Natural killer cell (primary cell): ENCODE measurements at regions of chr11 and their contacts with region 1.

Region 1: DNA sequence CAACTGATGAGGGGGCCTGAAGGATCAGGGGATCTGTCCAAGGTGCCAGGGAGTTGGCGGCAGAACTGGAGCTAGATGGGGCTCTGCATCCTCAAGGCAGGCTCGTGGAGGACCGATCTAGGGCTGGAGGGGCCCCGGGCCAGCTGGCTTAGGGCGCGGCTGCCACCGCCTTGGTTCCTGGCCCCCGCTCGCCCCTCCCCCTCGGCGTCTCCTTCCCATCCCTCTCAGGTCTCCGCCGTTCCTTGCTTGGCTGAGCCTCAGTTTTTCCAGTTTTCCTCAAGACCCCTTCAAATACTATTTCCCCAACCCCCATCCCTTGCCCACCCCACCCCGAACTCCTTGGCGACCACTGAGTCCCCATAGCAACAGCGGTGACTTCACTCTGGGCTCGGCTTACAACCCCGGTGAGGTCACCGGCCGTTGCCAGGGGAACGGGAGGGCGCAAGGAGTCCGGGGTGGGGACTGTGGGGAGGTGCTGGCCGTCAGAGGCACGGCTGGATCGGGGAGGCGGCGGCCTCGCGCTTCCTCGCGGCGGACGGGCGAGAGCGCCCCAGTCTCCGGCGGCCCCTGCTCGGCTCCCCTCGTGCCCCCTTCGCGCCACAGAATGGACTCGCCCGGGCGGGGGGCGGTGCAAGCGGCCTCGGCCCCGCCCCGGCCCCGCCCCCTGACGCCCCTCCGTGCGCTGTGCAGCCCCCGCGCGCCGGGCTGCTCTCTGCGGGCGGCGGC is 7.5 kb downstream of the FREY1 start:
- DNase-seq: peak; percentile 79 to 80
- ATAC-seq: peak; percentile 77 to 86 (median 85)
- H3K4me3 ChIP-seq: peak overlapping the region; percentile 18
- H3K4me3 Mint-ChIP-seq: peak overlapping the region; percentile 78
- H3K27ac ChIP-seq: no peak overlapping the region
- H3K27ac Mint-ChIP-seq: peak overlapping the region in 1 of 2 donors; percentile 85
- H3K4me1 ChIP-seq: peaks cover 17% of the 10 kb centered on the region
- H3K4me1 Mint-ChIP-seq: peaks cover 0 to 17% of the 10 kb centered on the region in 2 donors
- H3K27me3 ChIP-seq: peaks cover 27% of the 10 kb centered on the region
- H3K27me3 Mint-ChIP-seq: peaks cover 0 to 32% of the 10 kb centered on the region in 2 donors
- CTCF ChIP-seq: no peak

Region 2: GRCh38 chr11:45917623-45918330 is 18.2 kb after region 1 on chr11 and contains the start of gene PEX16:
- intact Hi-C with region 1: loop called (anchors 1 kb)
- DNase-seq: peak; percentile 92 to 99
- ATAC-seq: peak; percentile 88 to 97 (median 92)
- H3K4me3 ChIP-seq: peak within 1 kb of the TSS; percentile 85
- H3K4me3 Mint-ChIP-seq: peak within 1 kb of the TSS; percentile 97
- H3K27ac ChIP-seq: peak within 1 kb of the TSS; percentile 91
- H3K27ac Mint-ChIP-seq: peak within 1 kb of the TSS; percentile 96
- H3K4me1 ChIP-seq: peaks cover 52% of the 10 kb centered on the region
- H3K4me1 Mint-ChIP-seq: peaks cover 30 to 43% of the 10 kb centered on the region in 2 donors
- H3K27me3 ChIP-seq: peaks cover 3% of the 10 kb centered on the region
- H3K27me3 Mint-ChIP-seq: peaks cover 0 to 4% of the 10 kb centered on the region in 2 donors
- CTCF ChIP-seq: no peak
- total RNA-seq, gene PEX16: 61.3 to 75.8 (median 67.6) TPM